ENCODE measurements at regions of chr19 and their contacts with region 1.

Region 1: DNA sequence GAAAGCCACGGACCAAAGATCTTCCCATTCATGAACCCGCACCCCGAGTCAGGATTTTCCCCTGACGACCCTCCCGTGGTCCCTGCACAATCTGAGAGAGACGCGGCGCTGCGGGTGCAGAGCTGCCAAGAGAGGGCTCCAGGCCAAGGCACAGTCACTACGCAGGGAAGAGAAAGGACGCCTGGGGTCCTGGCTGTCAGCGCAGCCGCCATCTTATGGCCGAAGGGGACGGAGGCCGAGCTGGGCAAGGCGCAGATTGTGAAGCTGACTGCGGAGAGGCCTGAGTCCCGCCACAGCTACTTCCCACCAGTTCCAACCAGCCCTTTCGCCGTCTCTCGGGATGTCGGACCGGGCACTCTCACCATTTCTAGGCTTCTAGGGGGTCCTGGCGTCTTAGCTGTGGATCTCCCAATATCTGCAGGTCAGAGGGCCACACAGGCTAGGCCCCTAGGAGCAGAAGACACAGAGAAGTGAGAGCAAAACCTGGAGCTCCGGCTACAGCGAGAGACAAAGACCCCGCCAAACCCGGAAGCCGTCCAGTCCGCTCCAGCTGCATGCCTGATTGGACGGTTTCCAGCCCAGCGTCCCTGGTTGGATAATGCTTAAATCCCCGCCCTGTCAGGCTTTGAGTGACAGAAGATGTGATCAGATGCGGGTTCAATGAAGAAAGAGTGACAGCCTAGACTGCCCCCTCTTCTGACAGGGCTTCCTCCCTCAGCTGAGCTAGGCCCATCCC is at the start of gene ZNF100:
- DNase-seq: peak; percentile 96
- H3K4me3 ChIP-seq: peak within 1 kb of the TSS; percentile 51 to 81 (median 66)
- H3K27ac ChIP-seq: peak within 1 kb of the TSS; percentile 77 to 92 (median 87)
- H3K4me1 ChIP-seq: peaks cover 0 to 13% (median 7%) of the 10 kb centered on the region in 4 donors
- H3K27me3 ChIP-seq: no peaks in the 10 kb centered on the region
- CTCF ChIP-seq: no peak
- EP300 ChIP-seq: no peak
- POLR2A ChIP-seq: peak; percentile 18 to 27
- total RNA-seq, gene ZNF100: 3.8 to 8.4 (median 6.9) TPM

Region 2: DNA sequence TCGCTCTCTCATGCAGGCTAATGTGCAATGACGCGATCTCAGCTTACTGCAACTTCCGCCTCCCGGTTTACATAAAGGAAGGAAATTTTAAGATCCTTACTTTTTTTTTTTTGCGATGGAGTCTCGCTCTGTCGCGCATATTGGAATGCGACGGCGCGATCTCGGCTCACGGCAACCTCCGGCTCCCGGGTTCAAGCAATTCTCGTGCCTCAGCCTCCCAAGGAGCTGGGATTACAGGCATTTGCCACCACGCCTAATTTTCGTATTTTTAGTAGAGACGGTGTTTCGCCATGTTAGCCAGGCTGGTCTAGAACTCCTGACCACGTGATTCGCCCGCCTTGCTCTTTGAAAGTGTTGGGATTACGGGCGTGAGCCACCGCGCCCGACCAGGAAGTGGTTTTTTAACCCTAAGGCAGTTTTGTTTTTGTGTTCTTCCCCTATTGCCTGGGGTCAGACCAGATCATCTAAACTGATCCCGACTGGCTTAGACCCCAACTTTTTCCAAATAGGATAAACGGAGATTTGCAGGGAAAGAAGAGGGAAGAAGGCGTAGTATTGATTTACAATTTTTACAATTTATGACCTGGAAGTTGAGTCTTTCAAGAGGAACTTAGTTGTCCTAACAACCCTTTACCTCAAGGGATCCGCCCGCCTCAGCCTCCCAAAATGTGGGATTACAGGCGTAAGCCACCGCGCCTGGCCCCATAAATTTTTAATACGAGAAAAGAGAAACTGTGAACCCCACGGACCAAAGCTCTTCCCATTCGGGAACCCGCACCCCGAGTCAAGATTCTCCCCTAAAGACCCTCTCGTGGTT is 1343.6 kb before region 1 on chr19:
- intact Hi-C with region 1: loop called (anchors 10 kb)
- DNase-seq: peak; percentile 83
- H3K4me3 ChIP-seq: peak overlapping the region; percentile 57 to 69 (median 63)
- H3K27ac ChIP-seq: peak overlapping the region; percentile 84 to 90 (median 88)
- H3K4me1 ChIP-seq: peaks cover 0 to 13% (median 2%) of the 10 kb centered on the region in 4 donors
- H3K27me3 ChIP-seq: no peaks in the 10 kb centered on the region
- CTCF ChIP-seq: no peak
- EP300 ChIP-seq: no peak
- POLR2A ChIP-seq: no peak

Region 3: GRCh38 chr19:21824679-21825078 is 57.4 kb after region 1 on chr19:
- intact Hi-C with region 1: no loop called
- DNase-seq: no peak
- H3K4me3 ChIP-seq: no peak overlapping the region
- H3K27ac ChIP-seq: peak overlapping the region; percentile 44 to 58 (median 47)
- H3K4me1 ChIP-seq: peaks cover 0 to 26% (median 18%) of the 10 kb centered on the region in 4 donors
- H3K27me3 ChIP-seq: no peaks in the 10 kb centered on the region
- CTCF ChIP-seq: no peak
- EP300 ChIP-seq: no peak
- POLR2A ChIP-seq: no peak

Region 4: GRCh38 chr19:22545751-22546150 is 778.5 kb after region 1 on chr19:
- intact Hi-C with region 1: loop called (anchors 10 kb)
- DNase-seq: no peak
- H3K4me3 ChIP-seq: no peak overlapping the region
- H3K27ac ChIP-seq: no peak overlapping the region
- H3K4me1 ChIP-seq: no peaks in the 10 kb centered on the region
- H3K27me3 ChIP-seq: no peaks in the 10 kb centered on the region
- CTCF ChIP-seq: peak; percentile 28 to 65 (median 46)
- EP300 ChIP-seq: no peak
- POLR2A ChIP-seq: no peak

Measured in sigmoid colon (tissue), 7 donors.